CD8-positive, alpha-beta T cell (primary cell): ENCODE measurements at regions of chr17 and their contacts with region 1.

Region 1: GRCh38 chr17:63425482-63425881 is 20.6 kb downstream of the CYB561 start:
- DNase-seq: peak; percentile 35 to 84 (median 73)
- ATAC-seq: peak; percentile 84
- H3K4me3 ChIP-seq: no peak overlapping the region
- H3K4me3 Mint-ChIP-seq: no peak overlapping the region
- H3K27ac ChIP-seq: no peak overlapping the region
- H3K27ac Mint-ChIP-seq: no peak overlapping the region
- H3K4me1 ChIP-seq: peaks cover 29% of the 10 kb centered on the region
- H3K4me1 Mint-ChIP-seq: peaks cover 43% of the 10 kb centered on the region
- H3K27me3 ChIP-seq: no peaks in the 10 kb centered on the region
- H3K27me3 Mint-ChIP-seq: no peaks in the 10 kb centered on the region
- CTCF ChIP-seq: peak; percentile 99

Region 2: GRCh38 chr17:63293323-63294075 is 132.0 kb before region 1 on chr17:
- CTCF ChIA-PET with region 1: no interaction called
- POLR2A ChIA-PET with region 1: no interaction called
- intact Hi-C with region 1: no loop called
- DNase-seq: no peak
- ATAC-seq: no peak
- H3K4me3 ChIP-seq: no peak overlapping the region
- H3K4me3 Mint-ChIP-seq: no peak overlapping the region
- H3K27ac ChIP-seq: no peak overlapping the region
- H3K27ac Mint-ChIP-seq: no peak overlapping the region
- H3K4me1 ChIP-seq: no peaks in the 10 kb centered on the region
- H3K4me1 Mint-ChIP-seq: peaks cover 7% of the 10 kb centered on the region
- H3K27me3 ChIP-seq: no peaks in the 10 kb centered on the region
- H3K27me3 Mint-ChIP-seq: no peaks in the 10 kb centered on the region
- CTCF ChIP-seq: no peak

Region 3: DNA sequence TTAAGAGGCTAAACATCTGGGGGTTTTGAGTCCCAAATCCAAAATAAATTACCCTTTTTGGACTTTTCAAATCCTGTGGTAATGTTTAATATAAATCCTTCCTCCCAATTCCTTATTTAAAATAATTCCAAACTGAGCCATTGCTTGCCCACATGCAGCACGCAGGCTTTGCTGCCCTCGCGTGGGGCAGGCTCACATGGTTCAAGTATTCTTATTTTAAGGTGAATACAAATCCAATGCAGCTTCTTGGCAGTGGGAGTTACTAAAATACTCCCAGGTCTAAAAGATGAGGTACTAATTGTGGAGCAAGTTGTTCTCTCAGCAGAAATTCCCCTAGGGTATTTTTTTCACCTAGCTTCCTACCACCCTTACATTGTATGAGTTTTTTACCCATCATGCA is 12.4 kb before region 1 on chr17:
- CTCF ChIA-PET with region 1: interaction called, 26 read pairs
- POLR2A ChIA-PET with region 1: interaction called, 4 read pairs
- intact Hi-C with region 1: no loop called
- DNase-seq: no peak
- ATAC-seq: no peak
- H3K4me3 ChIP-seq: no peak overlapping the region
- H3K4me3 Mint-ChIP-seq: no peak overlapping the region
- H3K27ac ChIP-seq: no peak overlapping the region
- H3K27ac Mint-ChIP-seq: no peak overlapping the region
- H3K4me1 ChIP-seq: no peaks in the 10 kb centered on the region
- H3K4me1 Mint-ChIP-seq: no peaks in the 10 kb centered on the region
- H3K27me3 ChIP-seq: no peaks in the 10 kb centered on the region
- H3K27me3 Mint-ChIP-seq: no peaks in the 10 kb centered on the region
- CTCF ChIP-seq: no peak

Region 4: GRCh38 chr17:63478791-63479494 is 53.5 kb after region 1 on chr17:
- CTCF ChIA-PET with region 1: interaction called, 282 read pairs
- POLR2A ChIA-PET with region 1: interaction called, 7 read pairs
- intact Hi-C with region 1: loop called (anchors 1 kb)
- DNase-seq: peak; percentile 60 to 84 (median 78)
- ATAC-seq: peak; percentile 81
- H3K4me3 ChIP-seq: no peak overlapping the region
- H3K4me3 Mint-ChIP-seq: peak overlapping the region; percentile 57
- H3K27ac ChIP-seq: no peak overlapping the region
- H3K27ac Mint-ChIP-seq: no peak overlapping the region
- H3K4me1 ChIP-seq: peaks cover 14% of the 10 kb centered on the region
- H3K4me1 Mint-ChIP-seq: peaks cover 11% of the 10 kb centered on the region
- H3K27me3 ChIP-seq: peaks cover 14% of the 10 kb centered on the region in 2 experiments
- H3K27me3 Mint-ChIP-seq: peaks cover 26% of the 10 kb centered on the region
- CTCF ChIP-seq: peak; percentile 61

Region 5: GRCh38 chr17:63611354-63611753 is 185.9 kb after region 1 on chr17:
- CTCF ChIA-PET with region 1: interaction called, 151 read pairs
- POLR2A ChIA-PET with region 1: interaction called, 11 read pairs
- intact Hi-C with region 1: loop called (anchors 1 kb)
- DNase-seq: peak in 1 of 9 experiments; percentile 37
- ATAC-seq: peak; percentile 13
- H3K4me3 ChIP-seq: no peak overlapping the region
- H3K4me3 Mint-ChIP-seq: no peak overlapping the region
- H3K27ac ChIP-seq: peak overlapping the region in 1 of 2 experiments; percentile 39
- H3K27ac Mint-ChIP-seq: peak overlapping the region; percentile 91
- H3K4me1 ChIP-seq: peaks cover 28% of the 10 kb centered on the region
- H3K4me1 Mint-ChIP-seq: peaks cover 31% of the 10 kb centered on the region
- H3K27me3 ChIP-seq: no peaks in the 10 kb centered on the region
- H3K27me3 Mint-ChIP-seq: no peaks in the 10 kb centered on the region
- CTCF ChIP-seq: no peak

Region 6: DNA sequence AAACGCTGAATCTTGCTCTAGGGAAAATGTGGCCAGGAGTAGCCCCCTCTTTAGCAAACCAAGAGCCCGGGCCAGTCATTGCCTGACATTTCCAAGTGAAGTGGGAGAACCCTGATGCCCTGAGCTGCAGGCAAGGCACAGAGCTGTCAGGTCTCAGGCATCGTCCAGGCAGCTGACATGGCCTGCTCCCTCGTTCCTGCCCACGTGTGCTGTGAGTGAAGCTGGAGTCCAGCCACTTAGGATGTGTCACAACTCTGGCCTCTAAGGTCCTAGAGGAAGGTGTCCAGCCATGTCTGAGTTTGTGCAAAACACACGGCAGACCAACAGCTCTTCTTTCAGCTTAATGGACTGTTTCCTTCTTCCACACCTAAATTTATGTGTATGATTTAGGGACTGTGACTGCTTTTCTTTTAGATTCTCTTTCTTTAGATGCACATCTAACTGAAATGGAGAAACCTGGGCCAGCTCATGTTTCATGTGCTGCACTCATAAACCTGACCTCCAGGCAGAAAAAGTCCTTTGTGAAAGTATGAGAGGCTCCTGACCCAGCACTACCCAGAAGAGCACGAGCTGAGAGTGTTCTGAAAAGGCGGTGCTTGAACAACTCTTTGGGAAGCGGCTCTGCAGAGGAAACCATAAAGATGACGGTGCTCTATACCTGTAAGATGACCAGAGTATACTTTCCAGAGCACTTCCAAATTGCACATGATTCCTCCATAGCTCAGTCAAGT is 289.2 kb after region 1 on chr17:
- CTCF ChIA-PET with region 1: interaction called, 36 read pairs
- POLR2A ChIA-PET with region 1: interaction called, 7 read pairs
- intact Hi-C with region 1: loop called (anchors 1 to 5 kb)
- DNase-seq: no peak
- ATAC-seq: no peak
- H3K4me3 ChIP-seq: no peak overlapping the region
- H3K4me3 Mint-ChIP-seq: no peak overlapping the region
- H3K27ac ChIP-seq: no peak overlapping the region
- H3K27ac Mint-ChIP-seq: no peak overlapping the region
- H3K4me1 ChIP-seq: peaks cover 12% of the 10 kb centered on the region
- H3K4me1 Mint-ChIP-seq: peaks cover 15% of the 10 kb centered on the region
- H3K27me3 ChIP-seq: no peaks in the 10 kb centered on the region
- H3K27me3 Mint-ChIP-seq: no peaks in the 10 kb centered on the region
- CTCF ChIP-seq: no peak